Calu3 (cell line): ENCODE measurements at regions of chr19 and their contacts with region 1.

Region 1: GRCh38 chr19:29873024-29873800 is 61.4 kb downstream of the CCNE1 start:
- DNase-seq: peak; percentile 66
- H3K4me3 Mint-ChIP-seq: peak overlapping the region; percentile 47
- H3K27ac Mint-ChIP-seq: no peak overlapping the region
- H3K4me1 Mint-ChIP-seq: peaks cover 8% of the 10 kb centered on the region
- H3K27me3 Mint-ChIP-seq: peaks cover 39% of the 10 kb centered on the region
- CTCF ChIP-seq: peak; percentile 76

Region 2: DNA sequence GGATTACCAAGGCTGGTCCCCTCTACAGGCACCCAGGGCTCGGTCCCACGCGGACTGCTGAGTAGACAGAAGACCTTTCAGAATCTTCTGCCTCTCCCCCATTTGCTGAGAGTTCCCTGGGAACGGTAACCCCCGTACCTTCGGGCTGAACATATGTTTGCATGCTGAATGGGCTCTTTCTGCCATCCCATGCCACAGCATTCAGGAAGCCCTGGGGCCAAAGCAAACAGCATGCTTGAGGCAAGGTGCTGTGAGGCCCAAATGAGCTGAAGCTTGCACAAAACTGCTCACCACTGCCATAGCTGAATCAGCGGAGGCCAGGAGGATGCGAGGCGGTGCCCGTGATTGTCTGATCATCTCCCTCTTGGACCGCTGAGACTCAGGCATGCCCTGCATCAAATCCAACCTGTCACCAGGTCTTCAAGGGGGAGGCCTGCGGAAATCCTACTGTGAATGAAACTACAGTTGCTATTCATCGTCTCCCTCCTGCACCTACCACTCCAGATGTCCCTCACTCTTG is 141.8 kb before region 1 on chr19:
- CTCF ChIA-PET with region 1: interaction called, 16 read pairs
- intact Hi-C with region 1: no loop called
- DNase-seq: no peak
- H3K4me3 Mint-ChIP-seq: no peak overlapping the region
- H3K27ac Mint-ChIP-seq: no peak overlapping the region
- H3K4me1 Mint-ChIP-seq: no peaks in the 10 kb centered on the region
- H3K27me3 Mint-ChIP-seq: peaks cover 97% of the 10 kb centered on the region
- CTCF ChIP-seq: no peak

Region 3: DNA sequence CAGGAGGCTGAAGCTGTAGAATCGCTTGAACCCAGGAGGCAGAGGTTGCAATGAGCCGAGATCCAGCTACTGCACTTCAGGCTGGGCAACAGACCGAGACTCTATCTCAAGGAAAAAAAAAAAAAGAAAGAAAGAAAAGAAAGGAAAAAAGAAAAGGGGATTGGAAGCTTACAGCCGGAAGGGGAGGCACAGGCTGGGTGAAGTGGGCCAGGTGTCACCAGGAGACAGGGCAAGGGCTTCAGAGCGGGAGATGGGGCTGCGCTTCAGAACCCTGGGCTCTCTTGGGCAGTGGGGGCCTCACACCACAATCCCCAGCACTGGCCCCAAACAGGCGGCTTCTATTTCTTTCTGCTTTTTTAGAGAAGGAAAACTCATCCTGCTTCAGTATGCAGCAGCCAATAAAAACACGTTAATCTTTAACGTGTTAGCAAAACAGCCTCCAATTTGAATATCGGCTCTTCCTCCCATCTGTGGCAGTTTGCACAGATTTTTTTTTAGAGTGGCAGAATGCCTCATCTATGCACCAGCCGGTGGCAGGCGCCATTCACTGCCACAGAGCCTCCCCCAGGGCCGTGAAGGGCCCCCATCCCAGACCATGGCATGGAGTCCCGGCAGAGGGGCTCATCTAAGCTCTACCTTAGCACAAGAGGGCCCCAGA is 111.5 kb before region 1 on chr19:
- CTCF ChIA-PET with region 1: interaction called, 5 read pairs
- intact Hi-C with region 1: loop called (anchors 2 kb)
- DNase-seq: no peak
- H3K4me3 Mint-ChIP-seq: no peak overlapping the region
- H3K27ac Mint-ChIP-seq: no peak overlapping the region
- H3K4me1 Mint-ChIP-seq: no peaks in the 10 kb centered on the region
- H3K27me3 Mint-ChIP-seq: peaks cover 52% of the 10 kb centered on the region
- CTCF ChIP-seq: no peak

Region 4: GRCh38 chr19:29771708-29772414 is 101.4 kb before region 1 on chr19:
- CTCF ChIA-PET with region 1: interaction called, 6 read pairs
- intact Hi-C with region 1: loop called (anchors 1 kb)
- DNase-seq: peak; percentile 79
- H3K4me3 Mint-ChIP-seq: no peak overlapping the region
- H3K27ac Mint-ChIP-seq: no peak overlapping the region
- H3K4me1 Mint-ChIP-seq: no peaks in the 10 kb centered on the region
- H3K27me3 Mint-ChIP-seq: peaks cover 21% of the 10 kb centered on the region
- CTCF ChIP-seq: peak; percentile 57

Region 5: GRCh38 chr19:29785955-29786589 is 87.1 kb before region 1 on chr19:
- CTCF ChIA-PET with region 1: no interaction called
- intact Hi-C with region 1: no loop called
- DNase-seq: peak; percentile 24
- H3K4me3 Mint-ChIP-seq: no peak overlapping the region
- H3K27ac Mint-ChIP-seq: no peak overlapping the region
- H3K4me1 Mint-ChIP-seq: no peaks in the 10 kb centered on the region
- H3K27me3 Mint-ChIP-seq: peaks cover 49% of the 10 kb centered on the region
- CTCF ChIP-seq: no peak

Region 6: DNA sequence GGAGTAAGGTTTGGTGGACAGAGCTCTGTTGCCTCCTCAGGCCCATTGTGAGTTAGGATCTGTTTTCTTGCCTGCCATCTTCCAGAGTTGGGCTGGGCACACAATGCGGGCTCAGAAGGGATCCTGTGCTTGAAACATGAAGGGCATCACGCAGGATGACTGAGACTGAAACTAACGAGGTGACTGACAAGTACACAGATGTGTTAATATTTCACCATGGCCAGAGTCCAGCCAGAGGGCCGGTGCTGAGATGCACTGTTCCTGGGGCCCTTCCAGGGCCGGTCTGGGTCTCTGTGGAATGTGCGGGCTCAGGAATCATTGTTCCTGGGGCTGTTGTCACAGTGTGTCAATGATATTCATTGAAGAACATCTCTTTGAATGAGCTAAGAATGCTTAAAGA is 232.5 kb after region 1 on chr19:
- CTCF ChIA-PET with region 1: no interaction called
- intact Hi-C with region 1: no loop called
- DNase-seq: no peak
- H3K4me3 Mint-ChIP-seq: no peak overlapping the region
- H3K27ac Mint-ChIP-seq: no peak overlapping the region
- H3K4me1 Mint-ChIP-seq: no peaks in the 10 kb centered on the region
- H3K27me3 Mint-ChIP-seq: peaks cover 42% of the 10 kb centered on the region
- CTCF ChIP-seq: no peak